PC-9 (cell line): ENCODE measurements at regions of chr12 and their contacts with region 1.

Region 1: DNA sequence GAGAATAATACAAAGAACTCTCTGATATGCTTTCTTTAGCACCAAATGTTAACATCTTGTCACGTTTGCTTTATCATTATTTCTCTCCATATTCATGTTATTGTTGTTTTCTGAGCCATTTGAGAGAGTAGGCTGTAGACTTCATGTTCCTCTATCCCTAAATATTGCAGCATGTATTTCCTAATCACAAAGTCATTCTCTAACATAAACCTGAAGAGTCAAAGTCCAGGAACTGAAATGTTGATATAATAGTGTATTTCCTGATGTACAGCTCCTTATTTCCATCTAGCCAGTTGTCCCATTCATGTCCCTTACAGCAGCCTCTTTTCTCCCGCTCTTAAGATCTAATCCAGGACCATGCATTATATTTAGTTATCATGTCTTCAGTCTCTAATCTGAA is 72.8 kb downstream of the SPATS2 start:
- DNase-seq: no peak
- H3K4me3 ChIP-seq: no peak overlapping the region
- H3K27ac ChIP-seq: no peak overlapping the region
- H3K4me1 ChIP-seq: no peaks in the 10 kb centered on the region
- H3K27me3 ChIP-seq: no peaks in the 10 kb centered on the region
- CTCF ChIP-seq: no peak

Region 2: GRCh38 chr12:49309391-49309790 is 130.6 kb before region 1 on chr12:
- CTCF ChIA-PET with region 1: no interaction called
- POLR2A ChIA-PET with region 1: no interaction called
- intact Hi-C with region 1: no loop called
- DNase-seq: no peak
- H3K4me3 ChIP-seq: no peak overlapping the region
- H3K27ac ChIP-seq: no peak overlapping the region
- H3K4me1 ChIP-seq: no peaks in the 10 kb centered on the region
- H3K27me3 ChIP-seq: no peaks in the 10 kb centered on the region
- CTCF ChIP-seq: no peak

Region 3: GRCh38 chr12:49388682-49389386 is 51.2 kb before region 1 on chr12:
- CTCF ChIA-PET with region 1: no interaction called
- POLR2A ChIA-PET with region 1: no interaction called
- intact Hi-C with region 1: no loop called
- DNase-seq: no peak
- H3K4me3 ChIP-seq: no peak overlapping the region
- H3K27ac ChIP-seq: no peak overlapping the region
- H3K4me1 ChIP-seq: no peaks in the 10 kb centered on the region
- H3K27me3 ChIP-seq: no peaks in the 10 kb centered on the region
- CTCF ChIP-seq: no peak

Region 4: DNA sequence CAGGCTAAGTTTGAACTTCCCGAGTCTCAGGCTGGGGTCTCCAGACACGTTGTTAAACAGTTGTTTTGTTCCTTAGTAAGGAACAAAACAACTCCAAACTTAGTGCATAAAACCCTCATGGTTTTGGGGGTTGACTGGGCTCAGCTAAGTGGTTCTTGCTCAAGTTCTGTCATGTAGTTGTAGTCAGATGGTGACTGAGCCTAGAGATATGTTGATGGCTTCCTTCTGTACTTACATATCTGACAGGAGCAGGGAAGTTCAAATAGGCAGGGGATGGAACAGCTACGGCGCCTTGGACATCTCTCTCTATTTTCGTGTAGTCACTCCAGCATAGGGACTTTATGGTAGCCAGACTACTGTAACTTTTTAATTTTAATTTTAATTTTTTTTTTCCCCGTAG is 27.0 kb before region 1 on chr12:
- CTCF ChIA-PET with region 1: interaction called, 11 read pairs
- POLR2A ChIA-PET with region 1: no interaction called
- intact Hi-C with region 1: no loop called
- DNase-seq: no peak
- H3K4me3 ChIP-seq: no peak overlapping the region
- H3K27ac ChIP-seq: no peak overlapping the region
- H3K4me1 ChIP-seq: no peaks in the 10 kb centered on the region
- H3K27me3 ChIP-seq: no peaks in the 10 kb centered on the region
- CTCF ChIP-seq: no peak

Region 5: DNA sequence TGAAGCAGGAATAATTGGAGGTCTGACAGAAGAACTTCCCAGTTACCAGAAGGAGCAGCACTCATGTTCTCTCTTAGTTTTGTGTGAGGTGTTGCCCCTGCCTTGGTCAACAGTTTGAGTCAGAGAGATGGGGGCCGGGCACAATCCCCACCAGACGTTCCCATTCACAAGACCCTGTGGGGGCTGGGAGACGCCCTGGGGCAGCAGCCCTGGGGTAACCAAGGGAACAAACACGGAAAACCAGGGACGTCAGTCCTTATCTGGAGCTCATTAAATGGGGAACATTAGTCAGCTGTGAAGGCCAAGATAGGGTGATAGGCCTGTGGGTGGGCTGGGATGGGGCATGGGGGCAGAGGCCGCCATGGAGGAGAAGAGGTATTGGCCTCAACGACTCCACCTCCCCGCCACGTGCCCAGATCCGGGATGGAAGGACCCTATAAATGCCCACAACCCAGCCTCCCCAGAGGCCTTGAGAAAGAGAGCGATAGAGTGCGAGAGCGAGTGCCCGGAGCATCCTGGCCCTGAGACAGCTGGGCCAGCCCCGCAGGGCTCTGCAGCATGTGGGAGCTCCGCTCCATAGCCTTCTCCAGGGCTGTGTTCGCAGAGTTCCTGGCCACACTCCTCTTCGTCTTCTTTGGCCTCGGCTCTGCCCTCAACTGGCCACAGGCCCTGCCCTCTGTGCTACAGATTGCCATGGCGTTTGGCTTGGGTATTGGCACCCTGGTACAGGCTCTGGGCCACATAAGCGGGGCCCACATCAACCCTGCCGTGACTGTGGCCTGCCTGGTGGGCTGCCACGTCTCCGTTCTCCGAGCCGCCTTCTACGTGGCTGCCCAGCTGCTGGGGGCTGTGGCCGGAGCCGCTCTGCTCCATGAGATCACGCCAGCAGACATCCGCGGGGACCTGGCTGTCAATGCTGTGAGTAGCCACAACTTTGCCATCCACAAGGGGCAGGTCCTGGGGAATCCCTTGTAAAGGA is 510.5 kb after region 1 on chr12 and contains the start of gene AQP2:
- CTCF ChIA-PET with region 1: interaction called, 10 read pairs
- POLR2A ChIA-PET with region 1: no interaction called
- intact Hi-C with region 1: no loop called
- DNase-seq: no peak
- H3K4me3 ChIP-seq: no peak within 1 kb of the TSS
- H3K27ac ChIP-seq: no peak within 1 kb of the TSS
- H3K4me1 ChIP-seq: peaks cover 8% of the 10 kb centered on the region
- H3K27me3 ChIP-seq: no peaks in the 10 kb centered on the region
- CTCF ChIP-seq: no peak
- total RNA-seq, gene AQP2: not detected in 2 replicates